Ascending aorta (tissue), 2 donors: ENCODE measurements at regions of chr3 and their contacts with region 1.

Region 1: GRCh38 chr3:15268033-15268631 is 62.1 kb downstream of the CAPN7 start:
- DNase-seq: peak in 1 of 2 donors; percentile 93
- H3K4me3 ChIP-seq: no peak overlapping the region
- H3K27ac ChIP-seq: peak overlapping the region; percentile 81 to 84
- H3K4me1 ChIP-seq: peaks cover 0 to 18% of the 10 kb centered on the region in 2 donors
- H3K27me3 ChIP-seq: no peaks in the 10 kb centered on the region
- CTCF ChIP-seq: peak; percentile 92 to 96 (median 95)

Region 2: GRCh38 chr3:15291589-15292541 is 23.7 kb after region 1 on chr3:
- intact Hi-C with region 1: loop called (anchors 2 kb)
- DNase-seq: no peak
- H3K4me3 ChIP-seq: no peak overlapping the region
- H3K27ac ChIP-seq: peak overlapping the region; percentile 80 to 92
- H3K4me1 ChIP-seq: peaks cover 31 to 50% of the 10 kb centered on the region in 2 donors
- H3K27me3 ChIP-seq: no peaks in the 10 kb centered on the region
- CTCF ChIP-seq: no peak

Region 3: DNA sequence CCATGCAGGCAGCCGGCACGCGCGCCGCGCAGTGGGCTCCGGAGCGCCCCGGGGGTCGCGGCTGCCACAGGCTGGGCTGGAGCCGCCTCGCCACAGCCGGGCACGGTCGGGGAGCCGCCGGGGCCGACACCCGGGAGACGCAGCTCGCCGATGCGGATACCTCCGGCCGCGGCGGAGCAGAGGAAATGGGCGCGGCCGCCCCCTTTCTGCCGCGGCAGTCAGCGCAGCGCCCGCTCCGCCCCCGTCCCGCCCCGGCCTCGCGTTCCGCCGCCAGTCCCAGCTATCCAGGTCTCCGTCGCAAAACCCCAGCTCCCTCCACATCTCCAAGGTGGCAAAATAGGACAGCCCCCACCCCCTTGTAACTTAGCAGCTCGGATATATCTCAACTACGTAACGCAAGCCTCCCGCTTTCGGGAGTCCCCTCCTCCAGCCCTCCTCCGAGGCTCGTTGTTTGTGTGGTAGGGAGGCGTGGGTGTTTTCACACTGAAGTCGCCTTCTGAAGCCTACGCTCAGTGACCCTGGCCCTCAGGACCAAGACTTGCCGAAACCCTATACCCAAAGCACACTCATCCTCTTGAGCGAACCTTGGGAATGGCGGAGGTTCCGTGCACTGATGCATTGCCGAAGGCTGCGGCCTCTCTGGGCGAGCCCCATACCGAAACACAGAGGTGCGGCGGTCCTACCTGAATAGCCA is 64.4 kb after region 1 on chr3 and contains the start of gene SH3BP5:
- intact Hi-C with region 1: loop called (anchors 1 kb)
- DNase-seq: peak in 1 of 2 donors; percentile 84
- H3K4me3 ChIP-seq: peak within 1 kb of the TSS; percentile 95 to 99
- H3K27ac ChIP-seq: peak within 1 kb of the TSS; percentile 92 to 94
- H3K4me1 ChIP-seq: peaks cover 0 to 16% of the 10 kb centered on the region in 2 donors
- H3K27me3 ChIP-seq: no peaks in the 10 kb centered on the region
- CTCF ChIP-seq: peak; percentile 62 to 92 (median 83)
- total RNA-seq, gene SH3BP5: 65.9 TPM

Region 4: DNA sequence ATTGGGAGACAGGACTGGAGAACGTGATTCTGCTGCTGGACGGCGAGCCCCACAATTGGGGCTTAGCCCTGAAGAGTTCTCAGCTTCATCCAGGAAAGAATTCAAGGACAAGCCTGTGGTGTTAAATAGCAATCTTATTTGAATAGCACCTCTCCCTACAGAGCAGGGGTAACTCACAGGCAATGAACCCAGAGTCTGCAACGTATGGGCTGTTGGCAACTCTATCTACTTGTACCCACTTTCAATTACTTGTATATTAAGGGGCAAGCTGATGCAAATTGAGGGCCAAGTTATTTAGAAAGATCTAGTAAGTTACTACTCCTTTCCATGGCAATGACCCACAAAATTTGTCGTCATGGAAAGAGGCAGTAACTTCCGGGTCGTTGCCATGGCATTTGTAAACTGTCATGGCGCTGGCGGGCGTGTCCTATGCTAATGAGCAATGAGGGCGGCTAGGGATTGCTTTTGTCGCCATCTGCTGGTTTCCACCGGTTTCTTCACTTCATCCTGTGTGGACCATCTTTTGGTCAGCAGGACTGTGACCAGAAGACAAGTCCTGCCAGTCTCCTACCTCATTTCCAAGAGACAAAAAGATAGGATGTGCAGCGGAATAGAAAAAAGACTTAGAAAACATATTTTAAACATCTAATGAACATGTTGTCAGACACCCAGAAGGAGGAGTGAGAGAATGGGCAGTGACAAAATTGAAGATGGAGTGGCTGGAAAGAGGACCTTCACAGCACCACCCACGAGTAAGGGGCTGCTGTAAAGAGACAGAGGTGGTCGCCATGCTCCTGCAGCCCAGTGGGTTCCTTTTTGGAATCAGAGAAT is 110.0 kb after region 1 on chr3:
- intact Hi-C with region 1: loop called (anchors 1 kb)
- DNase-seq: peak; percentile 89 to 98
- H3K4me3 ChIP-seq: no peak overlapping the region
- H3K27ac ChIP-seq: peak overlapping the region; percentile 61 to 66
- H3K4me1 ChIP-seq: peaks cover 0 to 2% of the 10 kb centered on the region in 2 donors
- H3K27me3 ChIP-seq: no peaks in the 10 kb centered on the region
- CTCF ChIP-seq: peak; percentile 81 to 96 (median 85)

Region 5: DNA sequence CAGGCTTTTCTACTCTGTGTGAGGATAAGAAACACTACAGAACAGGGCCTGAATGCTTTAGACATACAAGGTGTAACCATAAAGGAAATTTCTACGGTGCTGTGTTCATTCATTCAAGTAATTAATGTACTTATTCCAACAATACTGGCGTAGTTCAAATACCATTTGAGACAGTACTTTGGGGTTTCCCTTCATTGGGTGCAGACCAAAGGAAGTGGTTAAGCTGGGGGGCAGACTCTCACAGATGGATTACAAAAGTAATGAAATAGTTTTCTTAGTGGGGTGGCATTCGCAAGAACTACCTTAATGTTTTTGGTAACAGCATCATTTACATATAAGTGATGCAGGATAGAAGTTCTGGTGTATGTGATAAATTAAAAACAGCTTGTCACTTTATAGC is 399.4 kb after region 1 on chr3:
- intact Hi-C with region 1: no loop called
- DNase-seq: no peak
- H3K4me3 ChIP-seq: no peak overlapping the region
- H3K27ac ChIP-seq: no peak overlapping the region
- H3K4me1 ChIP-seq: no peaks in the 10 kb centered on the region
- H3K27me3 ChIP-seq: no peaks in the 10 kb centered on the region
- CTCF ChIP-seq: no peak